MCF 10A (cell line): ENCODE measurements at regions of chr7 and their contacts with region 1.

Region 1: DNA sequence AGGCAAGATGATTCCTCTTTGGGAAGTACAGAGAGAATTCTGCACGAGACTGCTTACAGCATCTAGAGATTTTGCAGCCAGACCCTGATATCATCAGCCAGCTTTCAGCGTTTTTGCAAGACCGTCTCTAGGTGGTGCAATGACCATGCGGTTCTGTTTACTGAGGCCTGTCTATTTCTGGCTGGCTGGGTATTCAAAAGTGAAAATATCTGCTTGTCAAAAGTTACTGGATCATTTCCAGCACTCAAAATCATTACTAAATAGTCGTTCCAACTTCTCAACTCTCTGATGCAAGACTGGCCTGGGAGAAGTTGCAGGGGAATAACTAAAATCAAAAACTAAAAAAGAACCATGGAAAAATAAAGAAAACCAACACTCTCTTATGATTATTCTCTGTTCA is 240.1 kb downstream of the ELMO1 start:
- DNase-seq: peak; percentile 87
- H3K4me3 Mint-ChIP-seq: no peak overlapping the region
- H3K27ac Mint-ChIP-seq: no peak overlapping the region
- H3K4me1 Mint-ChIP-seq: peaks cover 16% of the 10 kb centered on the region
- H3K27me3 Mint-ChIP-seq: no peaks in the 10 kb centered on the region
- CTCF ChIP-seq: peak; percentile 49

Region 2: GRCh38 chr7:37141742-37142141 is 66.8 kb before region 1 on chr7:
- CTCF ChIA-PET with region 1: no interaction called
- POLR2A ChIA-PET with region 1: no interaction called
- intact Hi-C with region 1: no loop called
- DNase-seq: no peak
- H3K4me3 Mint-ChIP-seq: no peak overlapping the region
- H3K27ac Mint-ChIP-seq: no peak overlapping the region
- H3K4me1 Mint-ChIP-seq: peaks cover 8% of the 10 kb centered on the region
- H3K27me3 Mint-ChIP-seq: no peaks in the 10 kb centered on the region
- CTCF ChIP-seq: peak; percentile 9

Region 3: GRCh38 chr7:37218956-37219355 is 10.4 kb after region 1 on chr7:
- CTCF ChIA-PET with region 1: interaction called, 10 read pairs
- POLR2A ChIA-PET with region 1: interaction called, 4 read pairs
- intact Hi-C with region 1: no loop called
- DNase-seq: no peak
- H3K4me3 Mint-ChIP-seq: no peak overlapping the region
- H3K27ac Mint-ChIP-seq: no peak overlapping the region
- H3K4me1 Mint-ChIP-seq: peaks cover 5% of the 10 kb centered on the region
- H3K27me3 Mint-ChIP-seq: no peaks in the 10 kb centered on the region
- CTCF ChIP-seq: no peak

Region 4: DNA sequence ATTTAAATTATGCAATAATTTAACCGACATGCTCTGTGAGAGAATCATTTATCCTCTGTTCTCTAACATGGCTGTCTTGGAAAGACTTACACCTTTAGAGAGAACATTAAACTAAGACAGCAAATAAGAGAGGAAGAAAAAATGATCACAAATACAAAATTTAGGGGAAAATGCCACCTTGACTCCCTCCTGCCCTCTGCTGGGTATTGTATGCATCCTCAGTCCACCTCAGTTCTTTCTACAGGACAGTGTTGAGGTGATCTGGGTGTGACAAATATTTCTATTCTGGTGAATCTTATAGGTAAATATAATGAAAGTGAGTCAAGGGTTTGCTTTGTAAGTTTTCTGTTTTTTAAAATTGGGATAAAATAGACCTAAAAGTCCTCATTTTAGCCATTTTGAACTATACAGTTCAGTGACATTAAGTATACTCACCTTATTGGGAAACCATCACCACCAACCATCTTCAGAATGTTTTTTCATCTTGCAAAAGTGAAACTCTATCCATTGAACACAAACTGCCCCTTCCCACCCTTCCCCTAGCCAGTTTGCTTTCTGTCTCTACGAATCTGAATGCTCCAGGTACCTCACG is 301.6 kb after region 1 on chr7:
- CTCF ChIA-PET with region 1: interaction called, 4 read pairs
- POLR2A ChIA-PET with region 1: no interaction called
- intact Hi-C with region 1: loop called (anchors 1 kb)
- DNase-seq: peak; percentile 51
- H3K4me3 Mint-ChIP-seq: no peak overlapping the region
- H3K27ac Mint-ChIP-seq: no peak overlapping the region
- H3K4me1 Mint-ChIP-seq: no peaks in the 10 kb centered on the region
- H3K27me3 Mint-ChIP-seq: no peaks in the 10 kb centered on the region
- CTCF ChIP-seq: peak; percentile 63

Region 5: DNA sequence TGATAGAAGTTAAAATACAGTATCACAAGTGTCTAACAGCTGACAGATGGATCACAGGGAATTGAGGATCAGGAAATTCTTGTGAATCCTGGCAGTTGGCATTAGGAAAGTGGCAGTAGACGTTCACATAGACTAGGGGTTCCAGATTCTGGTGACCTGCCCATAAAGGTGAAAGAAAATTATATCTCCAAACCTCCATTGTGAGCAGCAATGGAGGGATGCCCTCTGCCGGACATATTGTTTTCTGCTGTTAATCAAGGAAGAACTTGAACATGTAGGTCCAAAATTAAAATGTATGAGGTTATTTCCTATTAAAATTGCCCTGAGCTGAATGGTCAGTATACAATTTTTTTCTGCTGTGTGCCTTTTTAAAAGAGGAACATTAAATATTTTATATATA is 644.9 kb after region 1 on chr7:
- CTCF ChIA-PET with region 1: interaction called, 10 read pairs
- POLR2A ChIA-PET with region 1: no interaction called
- intact Hi-C with region 1: no loop called
- DNase-seq: peak; percentile 44
- H3K4me3 Mint-ChIP-seq: no peak overlapping the region
- H3K27ac Mint-ChIP-seq: no peak overlapping the region
- H3K4me1 Mint-ChIP-seq: no peaks in the 10 kb centered on the region
- H3K27me3 Mint-ChIP-seq: peaks cover 22% of the 10 kb centered on the region
- CTCF ChIP-seq: peak; percentile 62